Activated naive CD4-positive, alpha-beta T cell treated with anti-CD3 and anti-CD28 coated beads for 36 hours (primary cell): ENCODE measurements at regions of chr1 and their contacts with region 1.

Region 1: GRCh38 chr1:10507111-10507879 is 32.5 kb downstream of the PEX14 start:
- DNase-seq: peak; percentile 70
- H3K4me3 Mint-ChIP-seq: no peak overlapping the region
- H3K27ac Mint-ChIP-seq: no peak overlapping the region
- H3K4me1 Mint-ChIP-seq: peaks cover 40% of the 10 kb centered on the region
- H3K27me3 Mint-ChIP-seq: no peaks in the 10 kb centered on the region

Region 2: GRCh38 chr1:10170239-10170574 is 337.1 kb before region 1 on chr1:
- CTCF ChIA-PET with region 1: no interaction called
- intact Hi-C with region 1: loop called (anchors 1 kb)
- DNase-seq: peak; percentile 48
- H3K4me3 Mint-ChIP-seq: no peak overlapping the region
- H3K27ac Mint-ChIP-seq: peak overlapping the region; percentile 87
- H3K4me1 Mint-ChIP-seq: peaks cover 40% of the 10 kb centered on the region
- H3K27me3 Mint-ChIP-seq: no peaks in the 10 kb centered on the region

Region 3: DNA sequence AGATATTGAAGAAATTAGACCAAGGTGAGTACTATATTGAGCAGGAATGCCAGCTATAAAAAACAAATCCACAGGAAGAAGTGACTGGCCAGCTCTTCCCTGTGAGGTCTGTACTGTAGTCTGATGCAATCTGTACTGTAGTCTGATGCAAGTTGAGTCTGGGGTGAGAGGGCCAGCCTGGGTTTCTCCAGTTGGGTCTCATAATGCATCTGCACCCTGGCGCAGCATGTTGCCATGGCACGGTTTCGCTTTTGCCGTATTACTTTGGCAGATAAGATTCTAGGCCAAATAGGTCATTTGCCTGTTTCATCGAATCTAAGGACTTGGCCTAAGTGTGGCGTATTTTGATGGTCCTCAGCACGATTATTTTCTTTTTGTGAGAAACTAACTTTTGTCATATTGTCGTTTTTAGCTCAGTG is 132.8 kb before region 1 on chr1:
- CTCF ChIA-PET with region 1: no interaction called
- intact Hi-C with region 1: no loop called
- DNase-seq: no peak
- H3K4me3 Mint-ChIP-seq: no peak overlapping the region
- H3K27ac Mint-ChIP-seq: no peak overlapping the region
- H3K4me1 Mint-ChIP-seq: no peaks in the 10 kb centered on the region
- H3K27me3 Mint-ChIP-seq: no peaks in the 10 kb centered on the region

Region 4: DNA sequence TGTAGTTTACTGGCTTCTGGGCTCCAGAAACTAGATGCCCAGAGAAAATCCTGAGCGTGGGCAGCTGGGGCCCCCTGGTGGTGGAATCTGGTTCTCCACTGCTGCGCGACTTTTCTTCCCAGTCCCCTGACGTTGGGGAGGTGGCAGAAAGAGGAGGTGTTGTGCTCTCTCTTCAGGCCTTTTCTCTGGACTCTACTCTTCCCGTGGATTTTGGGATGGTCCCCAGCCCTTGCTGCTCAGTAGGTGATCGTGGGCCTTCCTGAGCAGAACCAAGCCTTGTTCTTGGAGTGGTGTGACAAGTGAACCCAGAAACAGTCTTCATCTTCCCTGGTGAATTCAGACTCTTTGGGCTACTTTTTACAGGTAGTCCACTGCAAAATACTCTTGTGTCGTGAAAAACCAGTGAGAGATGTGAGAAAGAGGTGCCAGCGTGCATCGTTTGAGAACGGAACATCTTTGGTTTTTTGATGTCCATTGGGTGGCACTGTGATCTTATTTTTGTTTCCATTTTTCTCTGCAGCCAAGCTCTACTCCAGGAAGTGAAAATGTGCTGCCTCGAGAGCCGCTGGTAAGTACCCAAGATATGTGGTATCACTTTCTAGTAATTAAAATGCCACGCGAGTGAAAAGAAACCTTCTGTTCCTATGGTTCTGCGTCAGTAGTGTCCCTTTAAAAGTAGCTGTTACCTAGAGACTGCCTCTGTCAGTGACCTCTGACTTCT is 12.4 kb before region 1 on chr1:
- CTCF ChIA-PET with region 1: interaction called, 85 read pairs
- intact Hi-C with region 1: loop called (anchors 1 kb)
- DNase-seq: peak; percentile 90
- H3K4me3 Mint-ChIP-seq: peak overlapping the region; percentile 67
- H3K27ac Mint-ChIP-seq: peak overlapping the region; percentile 87
- H3K4me1 Mint-ChIP-seq: peaks cover 38% of the 10 kb centered on the region
- H3K27me3 Mint-ChIP-seq: no peaks in the 10 kb centered on the region

Region 5: DNA sequence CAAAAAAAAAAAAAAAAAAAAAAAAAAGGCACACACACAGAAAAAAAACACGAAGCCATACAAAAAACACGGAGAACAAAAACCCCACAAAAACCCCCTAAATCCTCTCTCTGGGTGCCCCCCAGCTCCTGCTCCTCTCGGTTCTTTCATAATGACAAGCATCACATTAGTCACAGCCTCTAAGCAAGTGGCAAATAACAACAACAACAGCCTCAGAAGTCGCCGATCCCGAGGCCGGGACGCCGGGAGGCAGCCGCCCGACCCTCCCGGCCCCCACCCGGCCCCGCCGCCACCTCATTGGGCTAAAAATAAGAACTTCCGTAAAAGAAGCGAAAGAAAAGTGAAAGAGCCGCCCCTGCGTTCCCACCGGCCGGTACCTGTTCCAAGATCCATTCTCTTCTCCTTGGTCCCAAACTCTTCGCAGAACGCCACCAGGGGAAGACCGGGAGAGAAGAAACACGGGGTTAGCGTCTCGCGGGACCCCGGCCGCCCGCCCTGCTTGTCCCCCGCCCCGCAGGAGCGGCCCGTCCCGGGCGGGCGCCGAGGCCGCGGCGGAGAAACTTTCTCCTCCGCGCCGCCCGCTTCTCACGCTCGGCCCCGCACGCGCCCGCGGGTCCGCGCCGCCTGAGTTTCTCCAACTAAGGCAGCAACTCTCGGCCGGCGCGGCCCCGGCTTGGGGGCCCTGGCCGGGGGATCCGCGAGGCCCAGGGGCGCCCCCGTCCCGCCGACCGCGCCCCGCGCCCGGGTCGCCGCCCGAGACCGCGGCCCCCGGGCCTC is 186.4 kb after region 1 on chr1:
- CTCF ChIA-PET with region 1: no interaction called
- intact Hi-C with region 1: loop called (anchors 1 kb)
- DNase-seq: peak; percentile 53
- H3K4me3 Mint-ChIP-seq: peak overlapping the region; percentile 80
- H3K27ac Mint-ChIP-seq: peak overlapping the region; percentile 61
- H3K4me1 Mint-ChIP-seq: peaks cover 28% of the 10 kb centered on the region
- H3K27me3 Mint-ChIP-seq: peaks cover 2% of the 10 kb centered on the region

Region 6: DNA sequence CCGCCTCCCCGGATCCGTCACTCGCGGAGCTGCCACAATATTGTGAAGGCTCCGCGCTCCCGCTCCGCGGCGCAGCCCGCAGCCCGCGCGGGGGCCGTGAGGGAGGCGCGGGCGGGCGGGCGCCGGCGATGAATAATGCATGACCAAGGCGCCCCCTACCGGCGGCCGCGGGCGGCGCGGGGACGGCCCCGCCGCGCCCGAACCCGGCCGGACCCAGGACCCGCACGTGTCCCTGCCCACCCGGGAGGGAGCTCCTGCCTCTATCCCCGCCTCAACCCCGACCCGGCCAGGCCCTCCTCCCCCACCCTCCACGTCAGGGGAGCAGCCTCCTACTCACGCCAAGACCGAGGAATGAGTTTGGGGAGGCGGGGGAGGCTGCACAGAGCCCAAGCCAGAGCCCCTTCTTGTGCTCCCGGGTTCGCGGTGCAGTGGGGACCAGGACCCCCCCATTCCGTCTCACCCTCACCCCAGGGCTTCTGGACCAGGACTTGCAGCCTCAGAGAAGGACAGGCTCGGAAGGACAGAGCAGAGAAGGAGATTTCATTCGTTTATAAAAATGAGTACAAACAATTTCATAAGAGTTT is 359.9 kb after region 1 on chr1:
- CTCF ChIA-PET with region 1: interaction called, 5 read pairs
- intact Hi-C with region 1: loop called (anchors 1 kb)
- DNase-seq: peak; percentile 52
- H3K4me3 Mint-ChIP-seq: no peak overlapping the region
- H3K27ac Mint-ChIP-seq: no peak overlapping the region
- H3K4me1 Mint-ChIP-seq: peaks cover 12% of the 10 kb centered on the region
- H3K27me3 Mint-ChIP-seq: peaks cover 64% of the 10 kb centered on the region

Region 7: GRCh38 chr1:10941891-10942541 is 434.7 kb after region 1 on chr1:
- CTCF ChIA-PET with region 1: no interaction called
- intact Hi-C with region 1: loop called (anchors 1 kb)
- DNase-seq: peak; percentile 68
- H3K4me3 Mint-ChIP-seq: no peak overlapping the region
- H3K27ac Mint-ChIP-seq: no peak overlapping the region
- H3K4me1 Mint-ChIP-seq: peaks cover 44% of the 10 kb centered on the region
- H3K27me3 Mint-ChIP-seq: peaks cover 50% of the 10 kb centered on the region